ENCODE measurements at regions of chr16 and their contacts with region 1.

Region 1: DNA sequence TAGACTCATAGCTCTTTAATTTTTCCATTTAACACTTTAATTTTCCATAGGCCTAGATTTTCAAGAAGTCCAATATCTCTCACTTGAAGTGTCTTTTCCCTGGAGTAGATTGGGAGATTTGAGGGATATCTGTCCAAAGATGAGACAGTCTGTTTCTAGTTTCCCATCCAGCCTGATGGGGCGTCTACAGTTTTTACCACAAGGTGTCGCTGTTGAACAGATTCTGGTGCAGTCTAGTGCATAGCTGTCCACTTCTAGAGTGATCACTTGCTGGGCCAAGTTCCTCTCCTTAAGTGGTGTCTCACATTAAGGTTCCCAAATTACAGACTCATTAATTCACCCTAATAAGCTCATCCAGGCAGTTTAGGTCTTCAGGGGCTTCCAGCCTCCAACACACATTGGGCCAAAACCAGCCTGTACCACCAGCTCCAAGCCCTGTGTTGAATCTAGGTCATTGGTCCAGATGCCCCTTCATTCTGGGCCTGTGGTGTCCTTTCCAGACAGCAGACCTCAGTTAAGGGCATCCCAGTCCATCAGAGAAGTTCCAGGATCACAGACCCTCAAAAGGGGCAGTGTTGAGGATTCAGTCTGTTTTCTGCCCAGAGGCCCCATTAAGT is 9.4 kb downstream of the SNX20 start:
- DNase-seq: peak; percentile 50
- H3K4me3 ChIP-seq: no peak overlapping the region
- H3K27ac ChIP-seq: no peak overlapping the region
- H3K4me1 ChIP-seq: no peaks in the 10 kb centered on the region
- CTCF ChIP-seq: peak; percentile 90

Region 2: DNA sequence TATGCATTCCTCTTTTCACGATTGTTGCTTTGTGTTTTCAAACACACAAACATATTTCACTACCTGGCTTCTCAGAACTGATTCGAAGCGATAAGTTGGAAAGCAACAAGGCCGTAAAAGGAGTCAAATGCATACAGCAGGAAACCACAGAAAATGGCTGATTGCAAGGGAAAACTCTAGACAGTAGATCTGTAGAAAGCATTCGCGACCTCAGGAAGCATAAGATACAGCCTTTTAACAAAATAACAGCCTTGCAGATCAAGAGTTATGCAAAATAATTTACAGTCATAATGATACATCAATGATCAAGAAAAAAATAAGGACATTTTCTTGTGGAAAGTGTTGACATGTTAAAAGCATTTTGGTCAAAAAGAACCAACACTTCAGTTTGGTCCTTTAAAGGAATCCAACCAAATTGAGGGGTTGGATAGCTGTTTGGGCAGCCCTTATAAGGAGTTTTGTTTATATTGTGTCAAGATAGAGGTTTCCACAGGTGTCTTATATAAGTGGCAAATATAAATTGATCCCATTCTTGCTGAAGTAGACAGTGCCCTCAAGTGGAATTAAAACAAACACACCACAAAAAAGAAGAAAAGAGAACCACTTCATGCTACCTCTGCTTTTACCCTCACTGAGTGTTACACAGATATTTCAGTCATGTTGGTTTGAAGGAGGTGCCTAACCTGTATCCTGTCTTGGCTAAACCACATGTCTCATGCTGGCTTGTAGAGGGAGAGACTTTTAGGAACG is 75.6 kb after region 1 on chr16:
- CTCF ChIA-PET with region 1: no interaction called
- POLR2A ChIA-PET with region 1: no interaction called
- intact Hi-C with region 1: loop called (anchors 5 kb)
- DNase-seq: peak; percentile 36
- H3K4me3 ChIP-seq: no peak overlapping the region
- H3K27ac ChIP-seq: no peak overlapping the region
- H3K4me1 ChIP-seq: peaks cover 6% of the 10 kb centered on the region
- CTCF ChIP-seq: peak; percentile 74

Measured in OCI-LY7 (cell line).